ENCODE measurements at regions of chr7 and their contacts with region 1.

Region 1: GRCh38 chr7:38908759-38909335 is at the start of gene VPS41:
- DNase-seq: peak; percentile 56
- ATAC-seq: peak; percentile 96
- H3K4me3 Mint-ChIP-seq: peak within 1 kb of the TSS; percentile 98
- H3K27ac Mint-ChIP-seq: peak within 1 kb of the TSS; percentile 94
- H3K4me1 Mint-ChIP-seq: peaks cover 52% of the 10 kb centered on the region
- H3K27me3 Mint-ChIP-seq: peaks cover 2% of the 10 kb centered on the region
- CTCF ChIP-seq: no peak
- total RNA-seq, gene VPS41: 78.5 and 91.8 TPM in 2 replicates

Region 2: GRCh38 chr7:39566023-39566921 is 657.4 kb after region 1 on chr7 and contains the start of gene YAE1:
- CTCF ChIA-PET with region 1: no interaction called
- POLR2A ChIA-PET with region 1: no interaction called
- intact Hi-C with region 1: loop called (anchors 2 kb)
- DNase-seq: peak; percentile 79
- ATAC-seq: peak; percentile 96
- H3K4me3 Mint-ChIP-seq: peak within 1 kb of the TSS; percentile 99
- H3K27ac Mint-ChIP-seq: peak within 1 kb of the TSS; percentile 91
- H3K4me1 Mint-ChIP-seq: peaks cover 22% of the 10 kb centered on the region
- H3K27me3 Mint-ChIP-seq: peaks cover 1% of the 10 kb centered on the region
- CTCF ChIP-seq: no peak
- total RNA-seq, gene YAE1: 13.3 and 16.1 TPM in 2 replicates

Region 3: GRCh38 chr7:40134428-40135316 is 1225.8 kb after region 1 on chr7 and contains the starts of genes MPLKIP and SUGCT:
- CTCF ChIA-PET with region 1: no interaction called
- POLR2A ChIA-PET with region 1: interaction called, 3 read pairs
- intact Hi-C with region 1: loop called (anchors 1 kb)
- DNase-seq: peak; percentile 91
- ATAC-seq: peak; percentile 90
- H3K4me3 Mint-ChIP-seq: peak within 1 kb of the TSS; percentile 97
- H3K27ac Mint-ChIP-seq: peak within 1 kb of the TSS; percentile 97
- H3K4me1 Mint-ChIP-seq: peaks cover 35% of the 10 kb centered on the region
- H3K27me3 Mint-ChIP-seq: no peaks in the 10 kb centered on the region
- CTCF ChIP-seq: no peak
- total RNA-seq, gene MPLKIP: 29.9 and 35.1 TPM in 2 replicates
- total RNA-seq, gene SUGCT: 0.61 and 1.3 TPM in 2 replicates

Measured in activated B cell treated with CpG ODN at 0.5 μM for 24 hours (primary cell).